RWPE1 (cell line): ENCODE measurements at regions of chr9 and their contacts with region 1.

Region 1: GRCh38 chr9:12640016-12640587 is 53.1 kb upstream of the TYRP1 start:
- DNase-seq: peak; percentile 20
- H3K27ac ChIP-seq: no peak overlapping the region
- CTCF ChIP-seq: peak; percentile 50

Region 2: DNA sequence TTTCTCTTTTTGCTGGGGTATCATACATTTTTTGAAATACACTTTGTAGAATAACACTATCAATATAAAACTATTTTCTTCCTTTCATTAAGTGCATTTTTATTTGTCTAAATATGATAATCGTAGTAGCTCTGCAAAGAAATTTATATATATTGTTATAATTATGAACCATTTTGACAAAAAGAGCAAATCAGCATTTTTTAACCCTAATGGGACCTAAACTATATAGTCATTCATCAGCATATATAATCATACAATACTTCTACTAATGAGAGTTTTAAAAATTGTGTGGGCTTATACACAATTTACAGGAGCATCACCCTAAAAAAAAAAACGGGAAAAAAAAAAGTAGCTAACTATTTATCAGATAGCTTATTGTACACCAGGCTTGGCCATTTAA is 276.7 kb before region 1 on chr9:
- CTCF ChIA-PET with region 1: interaction called, 11 read pairs
- POLR2A ChIA-PET with region 1: no interaction called
- DNase-seq: no peak
- H3K27ac ChIP-seq: no peak overlapping the region
- CTCF ChIP-seq: no peak

Region 3: DNA sequence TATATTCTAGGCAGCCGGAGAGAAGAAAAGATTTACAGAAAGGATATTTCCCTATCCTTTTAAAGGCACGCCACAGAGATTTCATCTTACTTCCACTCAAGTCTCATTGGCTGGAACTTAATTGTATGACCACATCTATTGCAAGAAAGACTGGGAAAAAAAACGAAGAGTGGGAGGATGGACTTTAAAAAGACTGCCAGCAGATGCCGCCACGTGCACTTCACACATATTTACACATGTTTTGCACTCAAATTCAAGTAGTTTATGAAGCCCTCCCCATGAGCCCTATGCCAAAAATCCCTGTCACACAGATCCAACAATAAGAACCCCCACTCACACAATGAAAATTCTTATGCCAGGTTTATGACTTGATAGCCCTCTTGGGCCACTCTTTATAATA is 85.5 kb before region 1 on chr9:
- CTCF ChIA-PET with region 1: interaction called, 17 read pairs
- POLR2A ChIA-PET with region 1: no interaction called
- DNase-seq: peak; percentile 3
- H3K27ac ChIP-seq: no peak overlapping the region
- CTCF ChIP-seq: no peak